ENCODE measurements at regions of chr1 and their contacts with region 1.

Region 1: DNA sequence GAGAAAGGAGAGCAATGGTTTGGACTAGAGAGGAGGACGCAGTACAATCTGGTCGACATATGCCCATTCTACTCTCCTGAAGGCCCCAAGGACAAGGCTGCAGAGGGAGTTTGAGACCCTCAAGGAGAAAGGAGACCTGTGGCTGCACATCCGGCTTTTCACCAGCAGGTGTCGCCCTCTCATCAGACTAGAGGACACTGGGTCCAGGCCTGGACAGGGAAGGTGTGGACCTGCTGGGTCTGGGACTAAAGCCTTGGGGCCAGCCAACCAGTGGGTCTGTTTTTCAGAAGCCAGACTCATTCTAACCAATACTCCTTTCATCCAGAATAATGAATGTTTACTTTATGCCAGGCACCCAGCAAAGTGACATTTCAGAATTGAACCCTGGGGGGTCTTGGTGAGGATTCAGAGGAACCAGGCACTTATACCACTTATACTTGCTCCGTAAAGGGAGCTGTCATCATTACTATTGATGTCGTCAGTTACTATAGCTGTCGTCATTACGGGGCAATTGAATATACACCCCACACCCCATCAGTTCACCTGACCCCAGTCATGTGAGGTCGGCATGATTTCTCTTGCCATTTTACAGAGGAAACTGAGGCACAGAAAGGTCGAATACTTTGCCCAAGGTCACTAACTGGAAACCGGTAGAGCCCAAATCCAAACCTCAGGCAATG is 5.1 kb downstream of the SRARP start:
- DNase-seq: peak; percentile 68
- H3K4me3 ChIP-seq: no peak overlapping the region
- H3K27ac ChIP-seq: no peak overlapping the region
- H3K4me1 ChIP-seq: peaks cover 19% of the 10 kb centered on the region
- CTCF ChIP-seq: peak; percentile 99

Region 2: GRCh38 chr1:15803354-15803753 is 205.8 kb before region 1 on chr1:
- CTCF ChIA-PET with region 1: no interaction called
- POLR2A ChIA-PET with region 1: no interaction called
- intact Hi-C with region 1: loop called (anchors 5 kb)
- DNase-seq: peak; percentile 63
- H3K4me3 ChIP-seq: no peak overlapping the region
- H3K27ac ChIP-seq: no peak overlapping the region
- H3K4me1 ChIP-seq: no peaks in the 10 kb centered on the region
- CTCF ChIP-seq: peak; percentile 81

Region 3: GRCh38 chr1:15975805-15976680 is 33.1 kb before region 1 on chr1 and contains the start of gene ZBTB17:
- CTCF ChIA-PET with region 1: interaction called, 10 read pairs
- POLR2A ChIA-PET with region 1: no interaction called
- intact Hi-C with region 1: no loop called
- DNase-seq: peak; percentile 98
- H3K4me3 ChIP-seq: peak within 1 kb of the TSS; percentile 78
- H3K27ac ChIP-seq: peak within 1 kb of the TSS; percentile 83
- H3K4me1 ChIP-seq: peaks cover 31% of the 10 kb centered on the region
- CTCF ChIP-seq: peak; percentile 7; the same call in 1 of the 2 replicates
- total RNA-seq, gene ZBTB17: 32.1 and 53.4 TPM in 2 replicates

Region 4: DNA sequence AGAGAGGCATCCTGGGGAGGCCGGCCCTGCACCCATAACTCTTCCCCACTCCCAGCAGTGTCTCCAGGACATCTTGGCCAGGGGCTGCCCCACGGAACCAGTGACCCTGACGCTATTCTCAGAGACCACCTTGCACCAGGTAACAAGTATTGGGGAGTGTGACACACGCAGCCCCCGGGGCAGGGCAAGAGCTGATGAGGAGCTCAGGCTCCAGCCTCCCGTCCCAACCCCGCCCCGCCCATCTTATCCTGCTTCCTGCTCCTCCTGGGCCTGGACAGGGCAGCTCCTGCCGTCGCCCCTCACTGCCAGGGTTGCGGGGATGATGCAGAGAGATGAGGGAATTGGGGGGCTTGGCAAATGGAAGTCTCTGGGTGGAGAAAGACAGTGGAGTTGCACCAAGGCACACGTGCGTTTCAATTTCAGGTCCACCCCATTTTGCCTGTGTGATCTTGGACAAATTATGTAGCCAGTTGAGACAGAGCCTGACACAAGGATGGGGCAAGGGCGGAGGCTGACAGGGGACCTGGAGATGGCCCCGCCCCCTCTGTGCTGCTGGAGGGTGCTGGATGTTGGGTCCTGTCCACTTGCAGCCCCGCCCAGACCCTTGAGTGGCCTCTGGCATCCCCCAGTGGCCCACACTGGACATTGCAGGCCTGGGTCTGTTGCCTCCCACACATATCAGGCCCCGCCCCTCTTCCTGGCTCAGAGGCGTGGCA is 23.4 kb after region 1 on chr1:
- CTCF ChIA-PET with region 1: no interaction called
- POLR2A ChIA-PET with region 1: no interaction called
- intact Hi-C with region 1: loop called (anchors 2 kb)
- DNase-seq: peak; percentile 73
- H3K4me3 ChIP-seq: no peak overlapping the region
- H3K27ac ChIP-seq: no peak overlapping the region
- H3K4me1 ChIP-seq: no peaks in the 10 kb centered on the region
- CTCF ChIP-seq: peak; percentile 74

Region 5: DNA sequence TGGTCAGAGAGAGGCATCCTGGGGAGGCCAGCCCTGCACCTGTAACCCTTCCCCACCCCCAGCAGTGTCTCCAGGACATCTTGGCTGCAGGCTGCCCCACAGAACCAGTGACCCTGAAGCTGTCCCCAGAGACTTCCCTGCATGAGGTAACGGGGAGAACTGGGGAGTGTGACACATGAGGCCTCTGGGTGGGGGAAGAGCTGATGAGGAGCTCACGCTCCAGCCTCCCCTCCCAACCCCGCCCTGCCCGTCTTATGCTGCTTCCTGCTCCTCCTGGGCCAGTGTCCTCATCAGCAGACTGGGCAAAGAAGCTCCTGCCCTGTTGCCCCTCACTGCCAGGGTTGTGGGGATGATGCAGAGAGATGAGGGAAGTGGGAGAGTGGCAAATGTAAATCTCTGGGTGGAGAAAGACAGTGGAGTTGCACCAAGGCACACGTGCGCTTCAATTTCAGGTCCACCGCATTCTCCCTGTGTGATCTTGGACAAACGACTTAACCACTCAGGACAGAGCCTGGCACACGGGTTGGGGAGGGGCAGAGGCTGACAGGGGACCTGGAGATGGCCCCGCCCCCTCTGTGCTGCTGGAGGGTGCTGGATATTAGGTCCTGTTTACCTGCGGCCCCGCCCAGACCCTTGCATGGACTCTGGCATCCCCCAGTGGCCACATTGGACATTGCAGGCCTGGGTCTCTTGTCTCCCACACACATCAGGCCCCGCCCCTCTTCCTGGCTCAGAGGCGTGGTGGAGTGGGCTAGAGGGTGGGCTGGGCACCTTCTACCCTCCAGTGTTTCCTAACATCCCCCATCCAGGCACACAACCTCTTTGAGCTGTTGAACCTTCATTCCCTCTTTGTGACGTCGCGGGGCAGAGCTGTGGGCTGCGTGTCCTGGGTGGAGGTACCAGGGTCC is 46.7 kb after region 1 on chr1:
- CTCF ChIA-PET with region 1: interaction called, 6 read pairs
- POLR2A ChIA-PET with region 1: no interaction called
- intact Hi-C with region 1: loop called (anchors 1 kb)
- DNase-seq: peak; percentile 83
- H3K4me3 ChIP-seq: no peak overlapping the region
- H3K27ac ChIP-seq: no peak overlapping the region
- H3K4me1 ChIP-seq: no peaks in the 10 kb centered on the region
- CTCF ChIP-seq: peak; percentile 78

Region 6: DNA sequence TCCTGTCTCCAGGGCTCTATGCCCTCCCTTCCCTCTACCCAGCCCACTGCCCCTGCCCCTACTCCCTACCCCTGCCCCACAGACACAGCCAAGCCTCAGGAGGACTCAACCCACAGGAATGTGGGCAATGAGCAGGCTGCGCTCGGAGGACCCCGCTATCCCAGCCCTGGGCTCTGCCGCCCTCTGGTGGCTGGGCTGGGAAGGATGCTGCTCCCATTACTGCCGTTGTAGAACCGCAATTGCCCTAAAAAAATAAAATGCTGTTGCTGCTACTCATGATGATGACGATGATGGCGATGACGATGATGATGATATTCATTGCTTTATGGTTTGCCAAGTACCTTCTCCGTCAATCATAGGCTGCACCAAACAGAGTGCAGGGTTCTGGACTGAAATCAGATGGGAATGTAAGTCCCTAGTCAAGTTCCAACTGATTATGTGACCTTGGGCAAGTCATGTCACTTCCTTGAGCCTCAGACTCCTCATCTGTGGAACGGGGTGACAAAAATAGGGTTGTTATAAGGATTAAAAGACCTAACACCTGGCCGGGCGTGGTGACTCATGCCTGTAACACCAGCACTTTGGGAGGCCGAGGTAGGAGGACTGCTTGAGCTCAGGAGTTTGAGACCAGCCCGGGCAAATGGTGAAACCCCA is 178.7 kb after region 1 on chr1:
- CTCF ChIA-PET with region 1: no interaction called
- POLR2A ChIA-PET with region 1: no interaction called
- intact Hi-C with region 1: loop called (anchors 10 kb)
- DNase-seq: peak; percentile 66
- H3K4me3 ChIP-seq: no peak overlapping the region
- H3K27ac ChIP-seq: no peak overlapping the region
- H3K4me1 ChIP-seq: no peaks in the 10 kb centered on the region
- CTCF ChIP-seq: peak; percentile 99